ENCODE measurements at regions of chr1 and their contacts with region 1.

Region 1: GRCh38 chr1:104132382-104132973 is 382.8 kb downstream of the AMY1C start:
- DNase-seq: peak; percentile 15
- H3K4me3 ChIP-seq: no peak overlapping the region
- H3K27ac ChIP-seq: no peak overlapping the region
- H3K4me1 ChIP-seq: no peaks in the 10 kb centered on the region
- H3K27me3 ChIP-seq: no peaks in the 10 kb centered on the region
- CTCF ChIP-seq: peak; percentile 51
- EP300 ChIP-seq: no peak
- RAD21 ChIP-seq: peak; percentile 78

Region 2: DNA sequence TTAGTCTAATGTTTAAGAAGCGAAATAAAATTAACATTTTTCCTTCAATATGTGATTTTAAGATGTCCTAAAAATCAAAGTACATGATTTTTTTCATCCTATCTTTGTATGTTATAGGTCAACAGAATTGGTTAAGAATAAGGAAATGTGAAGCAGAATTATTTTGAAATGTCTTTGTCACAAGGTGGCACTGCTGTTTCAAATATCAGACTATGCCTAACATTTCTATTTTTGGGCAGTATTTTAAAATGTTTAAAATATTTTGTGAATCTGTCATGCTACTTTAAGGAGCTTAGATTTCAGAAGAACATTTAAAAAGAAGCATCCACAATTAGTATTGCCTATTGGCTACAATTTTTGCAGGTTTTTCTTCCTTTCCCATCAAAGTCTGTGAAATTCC is 344.1 kb before region 1 on chr1:
- CTCF ChIA-PET with region 1: interaction called, 23 read pairs
- POLR2A ChIA-PET with region 1: no interaction called
- DNase-seq: no peak
- H3K4me3 ChIP-seq: peak overlapping the region in 1 of 2 experiments; percentile 1; a peak in 1 of 4 replicates
- H3K27ac ChIP-seq: no peak overlapping the region
- H3K4me1 ChIP-seq: no peaks in the 10 kb centered on the region
- H3K27me3 ChIP-seq: no peaks in the 10 kb centered on the region
- CTCF ChIP-seq: peak; percentile 53
- EP300 ChIP-seq: no peak
- RAD21 ChIP-seq: peak; percentile 68

Region 3: GRCh38 chr1:103948526-103948925 is 184.0 kb before region 1 on chr1:
- CTCF ChIA-PET with region 1: interaction called, 24 read pairs
- POLR2A ChIA-PET with region 1: no interaction called
- DNase-seq: no peak
- H3K4me3 ChIP-seq: no peak overlapping the region
- H3K27ac ChIP-seq: no peak overlapping the region
- H3K4me1 ChIP-seq: peaks cover 0 to 6% of the 10 kb centered on the region in 2 experiments; a peak in 2 of 4 replicates
- H3K27me3 ChIP-seq: no peaks in the 10 kb centered on the region
- CTCF ChIP-seq: peak; percentile 52
- EP300 ChIP-seq: no peak
- RAD21 ChIP-seq: peak; percentile 64

Region 4: GRCh38 chr1:104056786-104057185 is 75.7 kb before region 1 on chr1:
- CTCF ChIA-PET with region 1: no interaction called
- POLR2A ChIA-PET with region 1: no interaction called
- DNase-seq: no peak
- H3K4me3 ChIP-seq: no peak overlapping the region
- H3K27ac ChIP-seq: no peak overlapping the region
- H3K4me1 ChIP-seq: no peaks in the 10 kb centered on the region
- H3K27me3 ChIP-seq: no peaks in the 10 kb centered on the region
- CTCF ChIP-seq: no peak
- EP300 ChIP-seq: no peak
- RAD21 ChIP-seq: no peak

Region 5: DNA sequence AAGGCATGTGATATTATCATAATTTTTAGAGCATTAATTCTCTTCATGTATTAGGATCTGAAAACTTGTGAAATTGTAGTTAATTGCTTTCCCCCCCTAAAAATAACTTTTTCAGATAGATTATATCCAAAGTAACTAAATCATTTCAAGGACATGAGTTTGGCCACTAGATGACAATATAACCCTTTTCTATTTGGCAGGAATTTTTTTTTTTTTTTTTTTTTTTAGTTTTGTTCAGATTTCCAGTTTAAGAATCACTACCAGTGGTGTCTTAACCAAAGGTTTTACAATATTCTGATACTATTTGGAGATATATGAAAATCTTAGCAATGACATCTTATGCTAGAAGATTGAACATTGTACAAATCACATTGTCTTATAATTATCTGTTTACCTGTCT is 12.0 kb before region 1 on chr1:
- CTCF ChIA-PET with region 1: interaction called, 11 read pairs
- POLR2A ChIA-PET with region 1: no interaction called
- DNase-seq: no peak
- H3K4me3 ChIP-seq: no peak overlapping the region
- H3K27ac ChIP-seq: no peak overlapping the region
- H3K4me1 ChIP-seq: no peaks in the 10 kb centered on the region
- H3K27me3 ChIP-seq: no peaks in the 10 kb centered on the region
- CTCF ChIP-seq: no peak
- EP300 ChIP-seq: no peak
- RAD21 ChIP-seq: peak; percentile 50

Measured in SK-N-SH (cell line).